ENCODE measurements at regions of chr2 and their contacts with region 1.

Region 1: GRCh38 chr2:168277276-168277675 is 29.9 kb upstream of the STK39 start:
- DNase-seq: no peak
- ATAC-seq: no peak
- H3K4me3 ChIP-seq: no peak overlapping the region
- H3K4me3 Mint-ChIP-seq: no peak overlapping the region
- H3K27ac ChIP-seq: no peak overlapping the region
- H3K27ac Mint-ChIP-seq: no peak overlapping the region
- H3K4me1 ChIP-seq: no peaks in the 10 kb centered on the region
- H3K4me1 Mint-ChIP-seq: no peaks in the 10 kb centered on the region
- H3K27me3 ChIP-seq: no peaks in the 10 kb centered on the region
- H3K27me3 Mint-ChIP-seq: peaks cover 7 to 8% of the 10 kb centered on the region in 2 donors

Region 2: GRCh38 chr2:168583710-168584521 is 306.6 kb after region 1 on chr2:
- CTCF ChIA-PET with region 1: no interaction called
- POLR2A ChIA-PET with region 1: interaction called in 1 of 2 experiments, 10 read pairs
- DNase-seq: no peak
- ATAC-seq: no peak
- H3K4me3 ChIP-seq: no peak overlapping the region
- H3K4me3 Mint-ChIP-seq: peak overlapping the region in 1 of 3 donors; percentile 47
- H3K27ac ChIP-seq: no peak overlapping the region
- H3K27ac Mint-ChIP-seq: peak overlapping the region in 1 of 2 donors; percentile 75
- H3K4me1 ChIP-seq: peaks cover 13 to 32% of the 10 kb centered on the region in 2 experiments
- H3K4me1 Mint-ChIP-seq: peaks cover 59 to 74% (median 59%) of the 10 kb centered on the region in 3 donors
- H3K27me3 ChIP-seq: no peaks in the 10 kb centered on the region
- H3K27me3 Mint-ChIP-seq: no peaks in the 10 kb centered on the region

Measured in T-cell (primary cell).